ENCODE measurements at regions of chr7 and their contacts with region 1.

Region 1: GRCh38 chr7:121395961-121396757 is at the start of gene FAM3C:
- DNase-seq: peak; percentile 93
- ATAC-seq: peak; percentile 93
- H3K4me3 ChIP-seq: peak within 1 kb of the TSS; percentile 80
- H3K27ac ChIP-seq: peak within 1 kb of the TSS; percentile 60
- H3K4me1 ChIP-seq: peaks cover 14% of the 10 kb centered on the region
- H3K27me3 ChIP-seq: no peaks in the 10 kb centered on the region
- CTCF ChIP-seq: peak; percentile 71
- total RNA-seq, gene FAM3C: 37.7 and 37.9 TPM in 2 replicates

Region 2: GRCh38 chr7:121366852-121367431 is 29.2 kb before region 1 on chr7:
- CTCF ChIA-PET with region 1: interaction called, 5 read pairs
- POLR2A ChIA-PET with region 1: interaction called, 3 read pairs
- intact Hi-C with region 1: loop called (anchors 1 kb)
- DNase-seq: peak; percentile 46
- ATAC-seq: peak; percentile 53
- H3K4me3 ChIP-seq: no peak overlapping the region
- H3K27ac ChIP-seq: no peak overlapping the region
- H3K4me1 ChIP-seq: peaks cover 9% of the 10 kb centered on the region
- H3K27me3 ChIP-seq: no peaks in the 10 kb centered on the region
- CTCF ChIP-seq: peak; percentile 86

Region 3: DNA sequence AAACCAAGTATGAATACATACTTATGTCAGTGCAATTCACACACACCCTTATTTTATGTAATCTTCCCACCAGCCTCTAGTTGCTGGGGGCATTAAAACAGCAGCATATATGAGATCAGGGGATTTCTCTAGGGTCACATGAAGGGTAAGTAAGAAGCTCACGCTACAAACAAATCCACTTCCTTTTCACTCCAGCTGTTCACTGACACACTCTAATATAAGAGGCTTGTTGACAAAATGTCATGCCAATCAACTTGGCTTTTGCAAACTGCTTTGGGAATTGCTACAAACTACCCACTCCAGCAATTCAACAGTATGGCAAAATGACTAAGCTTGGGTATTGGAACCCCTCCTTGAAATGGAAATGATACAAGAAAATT is 10.4 kb before region 1 on chr7:
- CTCF ChIA-PET with region 1: interaction called, 3 read pairs
- POLR2A ChIA-PET with region 1: interaction called, 3 read pairs
- intact Hi-C with region 1: loop called (anchors 1 kb)
- DNase-seq: no peak
- ATAC-seq: peak; percentile 71
- H3K4me3 ChIP-seq: no peak overlapping the region
- H3K27ac ChIP-seq: peak overlapping the region; percentile 82
- H3K4me1 ChIP-seq: peaks cover 17% of the 10 kb centered on the region
- H3K27me3 ChIP-seq: no peaks in the 10 kb centered on the region
- CTCF ChIP-seq: no peak

Region 4: DNA sequence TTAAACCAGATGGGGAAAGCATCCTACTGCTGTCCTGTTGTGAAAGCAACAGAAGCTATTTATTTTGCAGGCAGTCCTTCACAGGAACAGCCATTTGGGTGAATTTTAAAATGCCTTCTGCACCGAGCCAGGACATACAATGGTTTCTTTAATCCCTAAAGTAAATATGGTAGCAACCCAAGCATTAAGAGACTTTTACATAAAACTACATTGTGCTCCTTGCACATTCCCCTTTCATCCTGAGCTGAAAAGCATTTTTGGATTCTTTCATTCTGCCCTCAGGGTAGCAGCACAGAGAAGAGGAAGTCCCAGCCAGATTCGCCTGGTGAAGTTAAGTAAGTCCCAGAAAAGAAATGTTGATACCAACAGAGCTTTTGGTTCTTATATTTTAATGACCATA is 83.9 kb after region 1 on chr7:
- CTCF ChIA-PET with region 1: no interaction called
- POLR2A ChIA-PET with region 1: interaction called, 3 read pairs
- intact Hi-C with region 1: loop called (anchors 5 kb)
- DNase-seq: peak; percentile 50
- ATAC-seq: peak; percentile 93
- H3K4me3 ChIP-seq: no peak overlapping the region
- H3K27ac ChIP-seq: peak overlapping the region; percentile 6; the same call in 1 of the 2 replicates
- H3K4me1 ChIP-seq: peaks cover 12% of the 10 kb centered on the region
- H3K27me3 ChIP-seq: no peaks in the 10 kb centered on the region
- CTCF ChIP-seq: no peak

Region 5: DNA sequence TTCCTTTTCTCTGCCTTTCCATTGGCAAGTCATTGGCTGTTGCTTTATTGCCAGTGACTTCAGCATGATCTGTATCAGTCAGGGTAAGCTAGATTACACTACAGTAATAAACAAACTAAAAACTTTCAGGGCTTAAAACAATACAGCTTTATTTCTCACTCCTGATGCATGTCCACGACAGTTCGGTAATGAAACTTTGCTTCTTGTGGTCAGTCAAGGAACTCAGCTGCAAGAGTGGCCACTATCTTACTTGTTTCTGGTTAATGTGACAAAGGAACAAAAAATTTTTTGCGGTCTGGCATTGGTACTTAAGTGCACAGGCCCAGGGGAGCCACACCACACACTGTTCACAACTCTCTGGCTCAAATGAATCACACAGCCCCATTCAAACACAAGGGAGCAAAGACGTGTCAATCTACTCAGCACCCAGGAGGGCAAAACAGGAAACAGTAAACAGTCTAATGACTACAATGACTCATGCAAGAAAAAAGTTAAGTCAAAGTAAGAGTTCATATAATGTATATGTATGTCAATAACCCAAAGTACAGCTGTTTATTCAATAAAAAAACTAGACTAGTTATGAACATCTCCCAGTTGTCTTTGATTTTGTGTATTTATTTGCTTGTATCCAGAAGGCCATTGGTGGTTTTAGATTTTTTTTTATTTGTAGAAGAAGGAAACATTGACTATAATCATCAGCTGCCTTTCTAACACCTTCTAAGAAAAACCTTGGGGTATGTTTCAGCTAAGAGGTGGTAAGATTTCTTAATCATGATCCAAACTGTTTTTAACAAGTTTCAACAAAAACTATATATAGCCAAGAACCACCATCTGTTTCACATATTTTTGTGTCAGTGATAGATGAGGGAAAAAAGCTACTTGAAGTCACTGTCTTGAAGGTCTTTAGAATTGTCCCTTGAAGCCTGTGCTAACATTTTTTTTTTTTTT is 134.3 kb after region 1 on chr7:
- CTCF ChIA-PET with region 1: no interaction called
- POLR2A ChIA-PET with region 1: no interaction called
- intact Hi-C with region 1: loop called (anchors 1 kb)
- DNase-seq: peak; percentile 97
- ATAC-seq: peak; percentile 97
- H3K4me3 ChIP-seq: peak overlapping the region; percentile 54; the same call in 1 of the 2 replicates
- H3K27ac ChIP-seq: peak overlapping the region; percentile 98
- H3K4me1 ChIP-seq: peaks cover 28% of the 10 kb centered on the region
- H3K27me3 ChIP-seq: no peaks in the 10 kb centered on the region
- CTCF ChIP-seq: no peak